ENCODE measurements at regions of chr1 and their contacts with region 1.

Region 1: GRCh38 chr1:66242646-66243547 is 291.1 kb upstream of the SGIP1 start:
- DNase-seq: peak; percentile 44 to 85 (median 73)
- ATAC-seq: peak; percentile 82
- H3K4me3 ChIP-seq: no peak overlapping the region
- H3K4me3 Mint-ChIP-seq: no peak overlapping the region
- H3K27ac ChIP-seq: no peak overlapping the region
- H3K27ac Mint-ChIP-seq: no peak overlapping the region
- H3K4me1 ChIP-seq: peaks cover 12% of the 10 kb centered on the region
- H3K4me1 Mint-ChIP-seq: peaks cover 23% of the 10 kb centered on the region
- H3K27me3 ChIP-seq: no peaks in the 10 kb centered on the region
- H3K27me3 Mint-ChIP-seq: peaks cover 6% of the 10 kb centered on the region
- CTCF ChIP-seq: peak; percentile 97

Region 2: DNA sequence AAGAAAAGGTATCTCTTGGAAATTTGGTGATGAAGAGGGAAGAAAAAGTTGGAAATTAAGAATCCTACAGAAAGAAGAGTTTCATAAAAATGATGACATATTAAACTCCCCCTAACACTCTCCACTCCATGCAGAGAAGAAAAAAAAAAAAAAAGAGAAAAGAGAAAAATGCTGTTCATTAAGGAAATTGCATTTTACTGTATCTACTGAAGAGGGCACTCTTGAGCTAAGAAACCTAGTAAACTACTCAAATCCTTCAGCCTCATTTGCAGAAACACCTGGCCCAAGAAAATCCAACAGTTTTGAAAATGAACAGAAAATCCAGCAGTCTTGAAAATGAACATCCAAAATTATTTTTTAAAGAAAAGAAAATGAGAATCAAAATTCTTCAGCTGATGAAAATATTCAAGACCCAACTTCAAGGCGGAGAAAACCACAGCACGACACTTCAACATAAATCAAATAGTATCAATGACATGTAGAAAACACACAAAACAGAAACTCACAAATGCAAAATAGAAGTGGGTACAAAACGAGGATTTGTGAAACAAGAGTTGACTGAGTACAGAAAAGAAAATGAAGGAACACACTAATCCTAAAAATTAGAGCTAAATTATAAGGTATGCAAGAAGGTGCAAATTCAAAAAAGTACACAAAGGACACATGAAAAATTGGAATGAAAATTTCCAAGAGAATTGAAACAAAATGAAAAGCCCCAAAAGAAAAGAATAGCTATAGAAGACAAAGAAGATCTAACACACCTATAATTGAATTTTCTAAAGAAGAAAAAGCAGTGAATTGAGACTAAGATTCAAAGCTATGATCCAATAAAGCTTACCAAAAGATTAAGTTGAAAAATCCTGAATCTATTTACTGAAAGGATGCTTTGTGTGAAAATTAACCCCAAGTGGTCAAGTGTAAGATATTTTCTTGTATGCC is 1006.8 kb before region 1 on chr1:
- CTCF ChIA-PET with region 1: no interaction called
- POLR2A ChIA-PET with region 1: no interaction called
- intact Hi-C with region 1: loop called in 1 of 2 experiments (anchors 5 kb)
- DNase-seq: peak in 2 of 9 experiments; percentile 53 to 56
- ATAC-seq: no peak
- H3K4me3 ChIP-seq: no peak overlapping the region
- H3K4me3 Mint-ChIP-seq: no peak overlapping the region
- H3K27ac ChIP-seq: no peak overlapping the region
- H3K27ac Mint-ChIP-seq: no peak overlapping the region
- H3K4me1 ChIP-seq: no peaks in the 10 kb centered on the region
- H3K4me1 Mint-ChIP-seq: no peaks in the 10 kb centered on the region
- H3K27me3 ChIP-seq: no peaks in the 10 kb centered on the region
- H3K27me3 Mint-ChIP-seq: peaks cover 21% of the 10 kb centered on the region
- CTCF ChIP-seq: peak; percentile 33

Region 3: DNA sequence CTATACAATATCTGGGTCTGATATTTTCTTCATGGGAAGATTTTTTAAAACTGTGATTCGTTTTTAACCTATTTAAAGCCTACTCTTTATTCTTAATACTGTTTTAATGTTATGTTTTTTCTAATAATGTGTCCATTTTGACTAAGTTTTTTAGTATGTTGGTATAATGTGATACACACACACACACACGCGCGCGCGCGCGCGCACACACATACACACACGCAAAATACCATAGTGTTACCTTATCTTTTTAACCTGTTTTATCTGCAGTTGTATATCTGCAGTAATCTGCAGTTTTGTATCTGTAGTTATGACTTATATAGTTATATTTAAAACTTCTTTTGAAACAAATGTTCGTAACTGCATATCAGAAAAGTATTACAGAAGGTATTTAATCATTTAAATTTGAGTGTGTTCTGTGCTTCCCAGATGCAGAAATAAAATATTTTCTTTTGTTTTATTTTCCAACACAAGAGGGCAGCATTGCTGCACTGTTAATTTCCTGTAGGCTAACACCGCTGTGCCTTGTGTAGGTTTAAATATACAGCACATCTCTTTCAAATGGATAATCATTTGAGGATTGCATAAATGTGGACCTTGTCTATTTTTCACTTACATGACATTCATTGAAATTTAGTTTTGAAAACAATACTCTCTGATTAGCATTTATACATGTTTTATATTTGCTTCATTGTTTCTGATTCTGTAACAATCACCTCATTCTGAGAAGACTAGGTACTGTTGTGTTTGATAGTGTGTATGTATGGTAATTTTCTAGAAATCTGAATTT is 284.1 kb before region 1 on chr1:
- CTCF ChIA-PET with region 1: interaction called, 142 read pairs
- POLR2A ChIA-PET with region 1: interaction called, 5 read pairs
- intact Hi-C with region 1: loop called (anchors 1 kb)
- DNase-seq: peak in 4 of 9 experiments; percentile 15 to 70 (median 42)
- ATAC-seq: peak; percentile 57
- H3K4me3 ChIP-seq: no peak overlapping the region
- H3K4me3 Mint-ChIP-seq: no peak overlapping the region
- H3K27ac ChIP-seq: no peak overlapping the region
- H3K27ac Mint-ChIP-seq: no peak overlapping the region
- H3K4me1 ChIP-seq: no peaks in the 10 kb centered on the region
- H3K4me1 Mint-ChIP-seq: no peaks in the 10 kb centered on the region
- H3K27me3 ChIP-seq: no peaks in the 10 kb centered on the region
- H3K27me3 Mint-ChIP-seq: peaks cover 3% of the 10 kb centered on the region
- CTCF ChIP-seq: peak; percentile 91

Region 4: DNA sequence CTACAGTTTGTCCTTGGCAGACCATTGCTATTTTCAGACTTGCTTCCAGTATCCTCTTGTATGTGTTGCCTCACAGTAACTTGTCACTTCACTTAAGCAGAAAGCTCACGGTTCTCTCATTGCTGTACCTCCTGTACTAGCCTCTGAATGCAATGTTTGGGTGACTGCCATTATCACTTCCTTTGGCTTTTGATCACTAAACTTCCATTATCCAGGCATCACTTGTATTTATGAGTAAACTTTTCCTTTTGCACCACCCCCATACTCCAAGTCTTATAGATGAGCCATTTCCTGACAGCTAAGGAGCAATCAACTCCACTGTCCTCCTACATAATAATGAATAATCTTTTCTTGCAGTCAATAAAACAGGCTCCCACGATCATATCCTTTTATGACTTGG is 194.9 kb before region 1 on chr1:
- CTCF ChIA-PET with region 1: no interaction called
- POLR2A ChIA-PET with region 1: no interaction called
- intact Hi-C with region 1: no loop called
- DNase-seq: no peak
- ATAC-seq: no peak
- H3K4me3 ChIP-seq: no peak overlapping the region
- H3K4me3 Mint-ChIP-seq: no peak overlapping the region
- H3K27ac ChIP-seq: no peak overlapping the region
- H3K27ac Mint-ChIP-seq: no peak overlapping the region
- H3K4me1 ChIP-seq: no peaks in the 10 kb centered on the region
- H3K4me1 Mint-ChIP-seq: no peaks in the 10 kb centered on the region
- H3K27me3 ChIP-seq: no peaks in the 10 kb centered on the region
- H3K27me3 Mint-ChIP-seq: peaks cover 7% of the 10 kb centered on the region
- CTCF ChIP-seq: no peak

Region 5: GRCh38 chr1:66217021-66217420 is 25.9 kb before region 1 on chr1:
- CTCF ChIA-PET with region 1: interaction called, 12 read pairs
- POLR2A ChIA-PET with region 1: no interaction called
- intact Hi-C with region 1: no loop called
- DNase-seq: no peak
- ATAC-seq: no peak
- H3K4me3 ChIP-seq: no peak overlapping the region
- H3K4me3 Mint-ChIP-seq: no peak overlapping the region
- H3K27ac ChIP-seq: no peak overlapping the region
- H3K27ac Mint-ChIP-seq: no peak overlapping the region
- H3K4me1 ChIP-seq: peaks cover 7% of the 10 kb centered on the region
- H3K4me1 Mint-ChIP-seq: peaks cover 13% of the 10 kb centered on the region
- H3K27me3 ChIP-seq: no peaks in the 10 kb centered on the region
- H3K27me3 Mint-ChIP-seq: no peaks in the 10 kb centered on the region
- CTCF ChIP-seq: no peak

Region 6: GRCh38 chr1:66253330-66253921 is 10.5 kb after region 1 on chr1:
- CTCF ChIA-PET with region 1: interaction called, 67 read pairs
- POLR2A ChIA-PET with region 1: no interaction called
- intact Hi-C with region 1: no loop called
- DNase-seq: peak in 3 of 9 experiments; percentile 19 to 74 (median 61)
- ATAC-seq: peak; percentile 86
- H3K4me3 ChIP-seq: no peak overlapping the region
- H3K4me3 Mint-ChIP-seq: no peak overlapping the region
- H3K27ac ChIP-seq: no peak overlapping the region
- H3K27ac Mint-ChIP-seq: no peak overlapping the region
- H3K4me1 ChIP-seq: peaks cover 5% of the 10 kb centered on the region
- H3K4me1 Mint-ChIP-seq: peaks cover 13% of the 10 kb centered on the region
- H3K27me3 ChIP-seq: no peaks in the 10 kb centered on the region
- H3K27me3 Mint-ChIP-seq: no peaks in the 10 kb centered on the region
- CTCF ChIP-seq: peak; percentile 84

Region 7: DNA sequence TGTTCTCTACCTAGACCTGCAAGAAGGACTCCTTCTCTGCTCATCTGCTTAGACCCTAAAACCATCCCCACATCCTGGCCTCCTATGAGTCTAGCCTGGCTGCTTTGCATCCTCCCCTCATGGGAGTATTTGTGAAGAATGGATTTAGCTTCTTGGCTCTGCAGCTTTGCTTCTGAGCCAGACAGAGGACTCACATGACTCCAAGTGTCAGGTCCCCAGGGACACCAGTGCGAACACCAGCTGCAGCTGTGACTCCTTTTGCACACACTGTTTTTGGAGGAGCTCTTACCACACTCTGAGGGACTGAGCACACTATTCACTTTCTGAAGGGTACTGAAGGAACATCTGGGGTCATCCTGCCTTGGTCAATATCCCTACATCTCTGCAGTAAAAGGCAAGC is 159.3 kb after region 1 on chr1:
- CTCF ChIA-PET with region 1: interaction called, 12 read pairs
- POLR2A ChIA-PET with region 1: no interaction called
- intact Hi-C with region 1: no loop called
- DNase-seq: peak in 1 of 9 experiments; percentile 24
- ATAC-seq: no peak
- H3K4me3 ChIP-seq: no peak overlapping the region
- H3K4me3 Mint-ChIP-seq: no peak overlapping the region
- H3K27ac ChIP-seq: no peak overlapping the region
- H3K27ac Mint-ChIP-seq: no peak overlapping the region
- H3K4me1 ChIP-seq: no peaks in the 10 kb centered on the region
- H3K4me1 Mint-ChIP-seq: no peaks in the 10 kb centered on the region
- H3K27me3 ChIP-seq: no peaks in the 10 kb centered on the region
- H3K27me3 Mint-ChIP-seq: no peaks in the 10 kb centered on the region
- CTCF ChIP-seq: no peak

Region 8: DNA sequence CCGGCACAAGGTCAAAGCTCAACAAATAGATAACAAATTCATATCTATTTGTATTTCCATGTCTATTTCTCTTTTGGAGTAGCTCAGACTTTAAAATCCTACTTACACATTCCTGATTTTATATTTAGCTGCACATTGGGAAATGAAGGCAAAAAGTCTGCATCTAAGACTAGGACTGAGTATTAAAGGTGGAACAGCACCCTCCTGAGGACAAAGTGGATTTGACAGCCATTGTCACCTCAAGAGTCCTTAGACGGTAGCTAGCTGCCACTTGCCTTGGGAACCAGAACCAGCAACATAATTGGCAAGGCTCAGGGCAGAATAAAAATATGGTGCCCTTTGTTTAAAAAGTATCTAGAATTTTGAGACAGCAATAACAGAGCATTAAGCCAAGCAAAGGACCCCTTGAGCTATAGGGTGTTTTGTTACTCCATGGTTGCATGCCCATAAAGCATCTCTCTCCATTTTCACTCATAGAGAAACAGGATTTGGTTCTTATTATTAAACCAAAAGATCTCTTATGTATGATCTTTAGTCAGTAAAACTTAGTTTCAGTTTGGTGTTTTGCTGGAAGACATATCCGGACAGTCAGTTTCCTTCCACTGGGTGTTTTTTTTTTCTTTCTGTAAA is 261.1 kb after region 1 on chr1:
- CTCF ChIA-PET with region 1: interaction called, 3 read pairs
- POLR2A ChIA-PET with region 1: no interaction called
- intact Hi-C with region 1: loop called in 1 of 2 experiments (anchors 5 kb)
- DNase-seq: peak in 3 of 9 experiments; percentile 14 to 48 (median 30)
- ATAC-seq: no peak
- H3K4me3 ChIP-seq: no peak overlapping the region
- H3K4me3 Mint-ChIP-seq: no peak overlapping the region
- H3K27ac ChIP-seq: no peak overlapping the region
- H3K27ac Mint-ChIP-seq: no peak overlapping the region
- H3K4me1 ChIP-seq: no peaks in the 10 kb centered on the region
- H3K4me1 Mint-ChIP-seq: no peaks in the 10 kb centered on the region
- H3K27me3 ChIP-seq: no peaks in the 10 kb centered on the region
- H3K27me3 Mint-ChIP-seq: peaks cover 10% of the 10 kb centered on the region
- CTCF ChIP-seq: peak; percentile 54